Heart right ventricle (tissue), 16 donors: ENCODE measurements at regions of chr16 and their contacts with region 1.

Region 1: DNA sequence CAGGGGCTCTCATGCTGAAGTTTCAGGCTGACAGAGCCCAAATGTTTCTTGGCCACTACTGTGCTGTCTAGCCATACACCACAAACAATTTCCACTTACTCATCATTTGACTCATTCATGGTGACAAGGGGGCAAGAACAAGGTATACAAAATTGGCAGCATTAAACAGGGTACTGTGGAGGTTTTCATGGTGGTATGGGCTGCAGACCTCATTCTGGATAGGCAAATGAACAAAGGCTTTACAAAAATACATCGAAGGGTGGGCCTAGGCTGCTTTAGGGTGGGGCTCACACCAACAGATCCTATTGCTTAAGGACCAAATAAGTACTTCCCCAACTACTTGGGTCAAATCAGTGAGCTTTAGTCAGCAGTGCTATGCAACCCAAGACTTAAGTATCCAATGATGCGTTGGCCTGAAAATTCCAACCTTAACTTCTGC is 53.0 kb downstream of the N4BP1 start:
- DNase-seq: no peak
- ATAC-seq: peak in 3 of 8 donors; percentile 20 to 46 (median 20)
- H3K4me3 ChIP-seq: no peak overlapping the region
- H3K27ac ChIP-seq: peak overlapping the region in 3 of 10 donors; percentile 15 to 65 (median 22)
- H3K4me1 ChIP-seq: peaks cover 16 to 99% (median 83%) of the 10 kb centered on the region in 9 donors
- H3K27me3 ChIP-seq: no peaks in the 10 kb centered on the region
- CTCF ChIP-seq: no peak

Region 2: GRCh38 chr16:48276102-48276501 is 280.8 kb before region 1 on chr16:
- intact Hi-C with region 1: no loop called
- DNase-seq: no peak
- ATAC-seq: peak in 4 of 8 donors; percentile 26 to 60 (median 44)
- H3K4me3 ChIP-seq: no peak overlapping the region
- H3K27ac ChIP-seq: peak overlapping the region in 4 of 10 donors; percentile 27 to 67 (median 50)
- H3K4me1 ChIP-seq: peaks cover 8 to 74% (median 59%) of the 10 kb centered on the region in 9 donors
- H3K27me3 ChIP-seq: no peaks in the 10 kb centered on the region
- CTCF ChIP-seq: no peak

Region 3: DNA sequence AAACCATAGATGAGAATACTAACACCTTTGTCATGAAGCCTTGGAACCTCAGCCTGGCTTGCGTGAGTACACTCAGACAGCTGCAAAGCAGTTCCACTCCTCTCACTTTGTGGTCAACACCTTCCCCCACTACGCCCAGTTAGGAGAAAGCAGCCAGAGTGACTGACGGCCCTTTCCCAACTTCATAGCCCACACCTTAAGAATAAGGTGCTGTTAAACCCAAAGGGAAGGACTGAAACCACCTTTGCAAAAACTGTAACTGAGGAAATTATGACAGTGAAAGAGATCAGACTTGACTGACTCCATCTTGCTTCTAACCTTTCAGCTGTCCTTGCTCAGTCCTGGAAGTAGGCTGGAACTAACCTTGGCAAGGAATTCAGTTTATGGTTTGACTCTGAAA is 39.4 kb after region 1 on chr16:
- intact Hi-C with region 1: loop called in 2 of 10 experiments (anchors 5 kb)
- DNase-seq: no peak
- ATAC-seq: peak in 4 of 8 donors; percentile 29 to 45 (median 36)
- H3K4me3 ChIP-seq: no peak overlapping the region
- H3K27ac ChIP-seq: peak overlapping the region in 5 of 10 donors; percentile 12 to 47 (median 36)
- H3K4me1 ChIP-seq: peaks cover 5 to 70% (median 61%) of the 10 kb centered on the region in 9 donors
- H3K27me3 ChIP-seq: no peaks in the 10 kb centered on the region
- CTCF ChIP-seq: no peak

Region 4: GRCh38 chr16:48603647-48604376 is 46.9 kb after region 1 on chr16:
- intact Hi-C with region 1: loop called in 4 of 10 experiments (anchors 5 kb)
- DNase-seq: no peak
- ATAC-seq: peak in 2 of 8 donors; percentile 25 to 33
- H3K4me3 ChIP-seq: no peak overlapping the region
- H3K27ac ChIP-seq: peak overlapping the region in 2 of 10 donors; percentile 13 to 75
- H3K4me1 ChIP-seq: peaks cover 18 to 100% (median 91%) of the 10 kb centered on the region in 9 donors
- H3K27me3 ChIP-seq: no peaks in the 10 kb centered on the region
- CTCF ChIP-seq: no peak